ENCODE measurements at regions of chr12 and their contacts with region 1.

Region 1: DNA sequence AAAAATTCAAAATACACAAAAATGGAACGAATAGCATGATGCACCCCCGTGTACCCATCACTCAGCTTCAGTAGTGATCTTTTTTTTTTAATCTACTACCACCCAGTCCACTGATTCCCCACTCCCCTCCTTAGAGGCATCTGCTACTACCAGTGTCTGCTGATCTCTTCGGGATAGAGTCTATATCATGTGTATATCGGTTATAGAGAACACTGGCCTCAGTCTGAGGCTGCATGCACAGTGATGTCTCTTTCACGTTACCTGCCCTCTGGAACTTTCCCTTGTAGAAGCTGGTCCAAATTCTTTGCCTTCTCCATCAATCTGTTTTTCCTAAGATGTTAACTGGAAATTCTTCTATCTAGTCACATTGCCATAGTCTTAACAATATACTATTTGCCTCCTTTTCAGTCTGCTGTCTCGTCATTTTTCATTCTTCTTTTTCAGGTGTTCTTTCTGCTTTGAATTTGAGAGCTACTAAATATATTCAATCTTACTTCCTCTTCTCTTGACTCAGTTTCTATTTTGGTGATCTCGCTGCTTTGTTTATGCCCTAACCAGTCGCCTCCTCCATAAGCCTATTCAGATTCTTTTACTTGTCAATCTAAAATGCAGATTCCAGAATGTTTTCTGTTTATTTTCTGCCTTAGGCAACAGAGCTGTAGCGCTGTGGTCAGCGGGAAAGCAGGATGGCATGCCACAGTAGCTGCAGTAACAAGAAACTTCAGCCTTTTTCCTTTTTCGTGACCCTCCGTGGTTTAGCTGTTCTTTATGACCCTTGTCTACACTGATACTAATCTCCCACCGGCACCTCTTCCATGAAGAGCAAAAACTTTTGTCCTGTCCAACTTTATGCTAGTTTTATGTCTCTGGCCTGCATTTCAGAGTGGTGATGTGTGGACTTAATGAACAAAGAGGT is 67.0 kb downstream of the FBXW8 start:
- DNase-seq: no peak
- ATAC-seq: no peak
- H3K4me3 ChIP-seq: no peak overlapping the region
- H3K27ac ChIP-seq: no peak overlapping the region
- H3K4me1 ChIP-seq: peaks cover 0 to 9% of the 10 kb centered on the region in 2 experiments; a peak in 2 of 5 replicates
- H3K27me3 ChIP-seq: no peaks in the 10 kb centered on the region
- CTCF ChIP-seq: no peak
- EP300 ChIP-seq: no peak
- POLR2A ChIP-seq: no peak
- RAD21 ChIP-seq: no peak

Region 2: GRCh38 chr12:116749884-116750283 is 227.8 kb before region 1 on chr12:
- CTCF ChIA-PET with region 1: no interaction called
- POLR2A ChIA-PET with region 1: no interaction called
- in situ Hi-C with region 1: no loop called
- intact Hi-C with region 1: no loop called
- DNase-seq: no peak
- ATAC-seq: no peak; the same call in 2 of the 3 replicates
- H3K4me3 ChIP-seq: no peak overlapping the region
- H3K27ac ChIP-seq: no peak overlapping the region
- H3K4me1 ChIP-seq: peaks cover 0 to 6% of the 10 kb centered on the region in 2 experiments; a peak in 2 of 5 replicates
- H3K27me3 ChIP-seq: peaks cover 16 to 17% of the 10 kb centered on the region in 2 experiments
- CTCF ChIP-seq: no peak
- EP300 ChIP-seq: no peak
- POLR2A ChIP-seq: no peak
- RAD21 ChIP-seq: no peak

Region 3: GRCh38 chr12:116903818-116904217 is 73.9 kb before region 1 on chr12:
- CTCF ChIA-PET with region 1: no interaction called
- POLR2A ChIA-PET with region 1: no interaction called
- in situ Hi-C with region 1: no loop called
- intact Hi-C with region 1: no loop called
- DNase-seq: no peak
- ATAC-seq: no peak
- H3K4me3 ChIP-seq: no peak overlapping the region
- H3K27ac ChIP-seq: no peak overlapping the region
- H3K4me1 ChIP-seq: no peaks in the 10 kb centered on the region
- H3K27me3 ChIP-seq: peaks cover 8 to 11% of the 10 kb centered on the region in 2 experiments; a peak in 4 of 5 replicates
- CTCF ChIP-seq: no peak
- EP300 ChIP-seq: no peak
- POLR2A ChIP-seq: no peak
- RAD21 ChIP-seq: no peak

Region 4: GRCh38 chr12:116990971-116991966 is 13.5 kb after region 1 on chr12:
- CTCF ChIA-PET with region 1: no interaction called
- POLR2A ChIA-PET with region 1: interaction called, 15 read pairs
- in situ Hi-C with region 1: no loop called
- intact Hi-C with region 1: no loop called
- DNase-seq: no peak
- ATAC-seq: no peak
- H3K4me3 ChIP-seq: no peak overlapping the region
- H3K27ac ChIP-seq: no peak overlapping the region
- H3K4me1 ChIP-seq: no peaks in the 10 kb centered on the region
- H3K27me3 ChIP-seq: no peaks in the 10 kb centered on the region
- CTCF ChIP-seq: no peak
- EP300 ChIP-seq: no peak
- POLR2A ChIP-seq: no peak
- RAD21 ChIP-seq: no peak